ENCODE measurements at regions of chr1 and their contacts with region 1.

Region 1: GRCh38 chr1:206784471-206784903 is 12.2 kb upstream of the IL10 start:
- DNase-seq: peak; percentile 96
- H3K4me3 Mint-ChIP-seq: peak overlapping the region; percentile 38
- H3K27ac Mint-ChIP-seq: peak overlapping the region; percentile 82
- H3K4me1 Mint-ChIP-seq: peaks cover 59% of the 10 kb centered on the region
- H3K27me3 Mint-ChIP-seq: peaks cover 22% of the 10 kb centered on the region

Region 2: DNA sequence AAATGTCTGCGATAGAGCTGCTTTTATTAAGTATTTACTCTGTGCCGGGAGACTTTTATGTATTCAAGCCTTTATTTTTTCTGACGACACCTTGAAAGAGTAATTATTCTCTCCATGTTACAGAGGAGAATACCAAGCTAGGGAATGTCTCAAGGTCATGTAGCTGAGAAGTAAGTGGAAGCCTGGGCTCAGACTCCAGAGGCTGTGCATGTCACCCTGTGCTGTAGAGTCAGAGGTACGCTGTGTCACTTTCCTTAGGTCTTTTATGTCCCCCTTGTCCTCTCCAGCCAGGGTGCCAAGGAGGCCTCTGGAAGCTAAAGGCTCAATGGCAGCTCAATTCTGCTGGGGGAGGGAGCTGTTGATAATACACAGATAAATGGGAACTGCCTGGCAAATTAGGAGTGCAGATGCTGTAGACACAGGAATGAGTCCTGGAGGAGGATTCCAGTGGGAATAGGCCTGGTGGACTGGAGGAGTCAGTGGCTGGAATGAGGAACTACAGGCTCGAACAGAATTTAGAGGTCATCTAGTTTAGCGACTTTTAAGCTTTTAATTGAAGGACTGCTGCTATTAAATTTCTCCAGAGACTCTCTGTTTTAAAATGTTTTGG is 23.2 kb before region 1 on chr1:
- CTCF ChIA-PET with region 1: interaction called, 43 read pairs
- POLR2A ChIA-PET with region 1: interaction called, 16 read pairs
- intact Hi-C with region 1: loop called (anchors 1 kb)
- DNase-seq: no peak
- H3K4me3 Mint-ChIP-seq: no peak overlapping the region
- H3K27ac Mint-ChIP-seq: no peak overlapping the region
- H3K4me1 Mint-ChIP-seq: peaks cover 30% of the 10 kb centered on the region
- H3K27me3 Mint-ChIP-seq: peaks cover 5% of the 10 kb centered on the region

Region 3: DNA sequence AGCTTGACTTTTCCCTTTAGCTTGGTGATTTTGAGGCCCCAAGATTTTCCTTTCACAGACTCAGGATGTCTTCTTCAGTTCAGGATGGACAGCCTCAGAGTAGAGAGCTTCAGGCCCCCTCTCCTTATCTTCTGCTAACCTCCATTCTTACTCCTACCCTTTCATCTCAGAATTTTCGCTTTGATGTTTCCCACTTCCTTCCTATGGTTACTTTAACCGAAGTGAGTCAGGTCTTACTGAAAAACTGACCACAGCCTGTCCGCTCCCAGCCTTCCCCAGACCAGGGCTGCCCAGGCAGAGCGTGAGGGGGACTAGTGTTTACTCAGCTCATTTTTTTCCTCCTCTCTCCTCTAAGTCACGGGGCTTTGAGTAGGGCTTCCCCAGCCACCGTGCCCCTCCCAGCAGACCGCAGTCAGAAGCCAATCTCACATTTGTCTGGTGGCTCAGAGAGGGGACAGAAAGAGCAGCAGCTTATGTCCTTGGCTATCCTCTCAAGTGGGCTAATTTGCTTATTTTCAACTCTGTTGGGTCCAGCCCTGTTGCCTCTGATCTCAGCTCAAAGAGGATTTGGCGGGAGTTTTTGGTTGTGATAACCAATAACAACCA is 18.1 kb before region 1 on chr1:
- CTCF ChIA-PET with region 1: interaction called, 43 read pairs
- POLR2A ChIA-PET with region 1: interaction called, 16 read pairs
- intact Hi-C with region 1: loop called (anchors 1 kb)
- DNase-seq: peak; percentile 84
- H3K4me3 Mint-ChIP-seq: peak overlapping the region; percentile 44
- H3K27ac Mint-ChIP-seq: peak overlapping the region; percentile 68
- H3K4me1 Mint-ChIP-seq: peaks cover 69% of the 10 kb centered on the region
- H3K27me3 Mint-ChIP-seq: peaks cover 6% of the 10 kb centered on the region

Region 4: GRCh38 chr1:206797534-206798383 is 13.3 kb after region 1 on chr1:
- CTCF ChIA-PET with region 1: interaction called, 14 read pairs
- POLR2A ChIA-PET with region 1: interaction called, 34 read pairs
- intact Hi-C with region 1: loop called (anchors 1 kb)
- DNase-seq: peak; percentile 53
- H3K4me3 Mint-ChIP-seq: peak overlapping the region; percentile 42
- H3K27ac Mint-ChIP-seq: no peak overlapping the region
- H3K4me1 Mint-ChIP-seq: peaks cover 71% of the 10 kb centered on the region
- H3K27me3 Mint-ChIP-seq: peaks cover 16% of the 10 kb centered on the region

Region 5: DNA sequence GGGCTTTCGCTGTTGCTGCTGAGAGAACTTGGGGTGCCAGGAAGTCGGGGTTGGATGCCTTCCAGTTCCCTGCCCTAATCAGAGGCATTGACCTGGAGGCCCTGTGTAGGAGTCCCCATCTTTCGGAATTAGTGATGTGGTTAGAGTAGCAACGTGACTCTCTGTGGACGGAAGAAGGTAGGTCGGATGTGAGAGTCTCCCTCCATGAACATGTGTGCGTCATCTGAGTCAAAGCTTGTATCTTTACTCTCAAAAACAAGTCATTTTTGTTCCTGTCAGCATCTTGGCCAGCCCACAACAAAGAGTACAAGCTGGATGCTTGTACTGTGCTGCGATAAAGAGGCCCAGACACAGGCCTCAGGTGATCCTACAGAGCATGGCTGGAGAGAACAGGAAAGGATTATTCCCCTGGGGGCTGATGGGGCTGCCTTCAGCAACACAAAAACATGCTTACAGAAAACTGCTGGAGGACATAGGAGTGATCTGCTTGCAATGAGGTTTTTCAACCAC is 18.8 kb after region 1 on chr1:
- CTCF ChIA-PET with region 1: interaction called, 18 read pairs
- POLR2A ChIA-PET with region 1: interaction called, 34 read pairs
- intact Hi-C with region 1: loop called (anchors 1 kb)
- DNase-seq: peak; percentile 89
- H3K4me3 Mint-ChIP-seq: peak overlapping the region; percentile 35
- H3K27ac Mint-ChIP-seq: peak overlapping the region; percentile 66
- H3K4me1 Mint-ChIP-seq: peaks cover 79% of the 10 kb centered on the region
- H3K27me3 Mint-ChIP-seq: peaks cover 13% of the 10 kb centered on the region

Region 6: GRCh38 chr1:206816390-206817287 is 32.2 kb after region 1 on chr1:
- CTCF ChIA-PET with region 1: no interaction called
- POLR2A ChIA-PET with region 1: no interaction called
- intact Hi-C with region 1: loop called (anchors 1 kb)
- DNase-seq: peak; percentile 43
- H3K4me3 Mint-ChIP-seq: peak overlapping the region; percentile 20
- H3K27ac Mint-ChIP-seq: peak overlapping the region; percentile 77
- H3K4me1 Mint-ChIP-seq: peaks cover 26% of the 10 kb centered on the region
- H3K27me3 Mint-ChIP-seq: no peaks in the 10 kb centered on the region

Measured in activated CD4-positive, alpha-beta memory T cell treated with anti-CD3 and anti-CD28 coated beads for 36 hours (primary cell).